Activated CD8-positive, alpha-beta T cell treated with anti-CD3 and anti-CD28 coated beads, Interleukin-2, amount 10 ng/mL, durations not matched to agents 7 days and 5 days (primary cell): ENCODE measurements at regions of chr15 and their contacts with region 1.

Region 1: GRCh38 chr15:55514414-55514850 is 6.4 kb upstream of the DNAAF4 start:
- DNase-seq: no peak
- ATAC-seq: no peak
- H3K4me3 Mint-ChIP-seq: no peak overlapping the region
- H3K27ac Mint-ChIP-seq: no peak overlapping the region
- H3K4me1 Mint-ChIP-seq: no peaks in the 10 kb centered on the region
- H3K27me3 Mint-ChIP-seq: no peaks in the 10 kb centered on the region

Region 2: DNA sequence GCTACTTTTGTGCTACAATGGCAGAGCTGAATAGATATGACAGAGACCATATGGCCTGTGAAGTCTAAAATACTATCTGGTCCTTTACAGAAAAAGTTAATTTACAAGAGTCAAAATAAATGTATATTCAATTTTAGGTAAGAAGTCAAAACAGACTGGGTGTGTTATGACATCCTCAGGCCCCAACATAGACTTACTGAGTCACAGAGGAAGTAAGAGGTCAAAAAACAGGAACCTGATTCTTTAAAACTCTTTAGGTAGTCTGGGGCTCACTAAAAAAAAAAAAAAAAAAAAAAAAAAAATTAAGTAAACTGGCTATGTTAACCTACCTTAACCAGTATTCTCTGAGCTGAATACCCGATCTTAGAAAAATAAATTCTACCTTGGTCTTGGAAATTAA is 19.5 kb before region 1 on chr15:
- CTCF ChIA-PET with region 1: no interaction called
- POLR2A ChIA-PET with region 1: no interaction called
- DNase-seq: no peak
- ATAC-seq: no peak
- H3K4me3 Mint-ChIP-seq: no peak overlapping the region
- H3K27ac Mint-ChIP-seq: no peak overlapping the region
- H3K4me1 Mint-ChIP-seq: peaks cover 14% of the 10 kb centered on the region
- H3K27me3 Mint-ChIP-seq: no peaks in the 10 kb centered on the region

Region 3: GRCh38 chr15:55526559-55527036 is 12.2 kb after region 1 on chr15:
- CTCF ChIA-PET with region 1: interaction called, 14 read pairs
- POLR2A ChIA-PET with region 1: no interaction called
- DNase-seq: peak; percentile 31
- ATAC-seq: peak; percentile 70
- H3K4me3 Mint-ChIP-seq: no peak overlapping the region
- H3K27ac Mint-ChIP-seq: no peak overlapping the region
- H3K4me1 Mint-ChIP-seq: peaks cover 2% of the 10 kb centered on the region
- H3K27me3 Mint-ChIP-seq: peaks cover 30% of the 10 kb centered on the region